AG04450 (cell line): ENCODE measurements at regions of chr2 and their contacts with region 1.

Region 1: GRCh38 chr2:10434886-10435819 is 13.0 kb downstream of the ODC1 start:
- DNase-seq: peak; percentile 34
- H3K4me3 ChIP-seq: no peak overlapping the region
- H3K27ac ChIP-seq: no peak overlapping the region
- H3K27me3 ChIP-seq: no peaks in the 10 kb centered on the region
- CTCF ChIP-seq: peak; percentile 97

Region 2: GRCh38 chr2:10064932-10065772 is 370.0 kb before region 1 on chr2:
- CTCF ChIA-PET with region 1: interaction called, 158 read pairs
- POLR2A ChIA-PET with region 1: no interaction called
- DNase-seq: no peak
- H3K4me3 ChIP-seq: no peak overlapping the region
- H3K27ac ChIP-seq: no peak overlapping the region
- H3K27me3 ChIP-seq: peaks cover 16% of the 10 kb centered on the region
- CTCF ChIP-seq: no peak

Region 3: DNA sequence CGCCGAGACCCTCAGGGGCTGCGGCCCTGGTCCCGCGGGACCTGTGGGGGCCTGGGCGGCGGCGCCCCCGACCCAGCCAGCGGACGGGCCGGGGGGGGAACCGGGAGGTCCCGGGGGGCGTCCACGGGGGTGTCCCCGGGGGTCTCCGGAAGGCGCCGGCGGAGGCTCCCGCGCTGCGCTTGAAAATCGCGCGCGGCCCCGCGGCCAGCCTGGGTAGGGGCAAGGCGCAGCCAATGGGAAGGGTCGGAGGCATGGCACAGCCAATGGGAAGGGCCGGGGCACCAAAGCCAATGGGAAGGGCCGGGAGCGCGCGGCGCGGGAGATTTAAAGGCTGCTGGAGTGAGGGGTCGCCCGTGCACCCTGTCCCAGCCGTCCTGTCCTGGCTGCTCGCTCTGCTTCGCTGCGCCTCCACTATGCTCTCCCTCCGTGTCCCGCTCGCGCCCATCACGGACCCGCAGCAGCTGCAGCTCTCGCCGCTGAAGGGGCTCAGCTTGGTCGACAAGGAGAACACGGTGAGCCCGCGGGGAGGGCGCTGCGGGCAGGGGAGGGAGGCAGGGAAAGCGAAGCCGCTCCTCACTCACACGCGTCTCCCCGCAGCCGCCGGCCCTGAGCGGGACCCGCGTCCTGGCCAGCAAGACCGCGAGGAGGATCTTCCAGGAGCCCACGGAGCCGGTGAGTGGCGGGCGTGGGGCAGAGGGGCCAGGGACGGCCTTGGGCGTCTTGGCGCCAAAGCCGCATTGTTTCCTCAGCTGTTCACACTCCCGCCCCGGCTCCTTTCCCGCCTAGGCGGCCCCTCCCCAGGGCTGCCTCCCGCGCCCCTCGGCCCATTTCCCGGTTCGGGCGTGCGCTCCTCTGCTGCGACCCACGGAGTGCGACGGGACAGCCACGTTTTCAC is 312.5 kb before region 1 on chr2 and contains the start of gene RRM2:
- CTCF ChIA-PET with region 1: interaction called, 171 read pairs
- POLR2A ChIA-PET with region 1: interaction called, 7 read pairs
- DNase-seq: peak; percentile 51
- H3K4me3 ChIP-seq: peak within 1 kb of the TSS; percentile 79
- H3K27ac ChIP-seq: peak within 1 kb of the TSS; percentile 47
- H3K27me3 ChIP-seq: no peaks in the 10 kb centered on the region
- CTCF ChIP-seq: no peak
- polyA plus RNA-seq, gene RRM2: 13.7 and 21.7 TPM in 2 replicates

Region 4: DNA sequence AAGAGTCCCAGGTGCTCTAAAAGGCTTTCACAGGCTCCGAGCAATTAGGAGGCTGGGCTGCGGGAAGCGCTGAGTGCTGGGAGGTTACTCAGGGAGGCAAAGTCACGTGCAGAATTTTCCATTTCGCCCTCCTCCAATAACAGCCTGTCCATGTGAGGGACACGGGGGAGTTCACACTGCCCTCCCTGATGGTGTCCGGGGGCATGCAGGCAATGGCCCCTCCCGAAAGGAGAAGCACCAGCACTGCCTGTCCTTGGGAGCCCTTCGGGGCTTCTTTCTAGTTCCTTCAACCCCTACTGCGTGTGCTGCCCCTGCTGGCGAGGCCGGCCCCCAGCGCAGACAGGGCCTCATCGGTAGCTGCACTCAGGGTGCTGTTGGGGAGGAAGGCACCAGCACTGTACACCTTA is 195.6 kb before region 1 on chr2:
- CTCF ChIA-PET with region 1: no interaction called
- POLR2A ChIA-PET with region 1: no interaction called
- DNase-seq: no peak
- H3K4me3 ChIP-seq: no peak overlapping the region
- H3K27ac ChIP-seq: no peak overlapping the region
- H3K27me3 ChIP-seq: peaks cover 24% of the 10 kb centered on the region
- CTCF ChIP-seq: peak; percentile 29; the same call in 1 of the 2 replicates

Region 5: GRCh38 chr2:10297959-10298531 is 137.1 kb before region 1 on chr2:
- CTCF ChIA-PET with region 1: interaction called, 10 read pairs
- POLR2A ChIA-PET with region 1: no interaction called
- DNase-seq: peak; percentile 87
- H3K4me3 ChIP-seq: no peak overlapping the region
- H3K27ac ChIP-seq: peak overlapping the region; percentile 77
- H3K27me3 ChIP-seq: no peaks in the 10 kb centered on the region
- CTCF ChIP-seq: no peak

Region 6: GRCh38 chr2:10448208-10448645 is 13.1 kb after region 1 on chr2 and contains the start of gene ODC1:
- CTCF ChIA-PET with region 1: interaction called, 28 read pairs
- POLR2A ChIA-PET with region 1: interaction called, 6 read pairs
- DNase-seq: peak; percentile 75
- H3K4me3 ChIP-seq: peak within 1 kb of the TSS; percentile 72
- H3K27ac ChIP-seq: peak within 1 kb of the TSS; percentile 83
- H3K27me3 ChIP-seq: no peaks in the 10 kb centered on the region
- CTCF ChIP-seq: no peak
- polyA plus RNA-seq, gene ODC1: 143 and 168 TPM in 2 replicates

Region 7: GRCh38 chr2:10931710-10932255 is 496.6 kb after region 1 on chr2:
- CTCF ChIA-PET with region 1: no interaction called
- POLR2A ChIA-PET with region 1: no interaction called
- DNase-seq: peak; percentile 42
- H3K4me3 ChIP-seq: no peak overlapping the region
- H3K27ac ChIP-seq: no peak overlapping the region
- H3K27me3 ChIP-seq: no peaks in the 10 kb centered on the region
- CTCF ChIP-seq: no peak